SK-N-SH (cell line): ENCODE measurements at regions of chr12 and their contacts with region 1.

Region 1: GRCh38 chr12:66130277-66131066 is at the start of gene LLPH:
- DNase-seq: peak; percentile 90
- H3K4me3 ChIP-seq: peak within 1 kb of the TSS; percentile 90 to 99
- H3K27ac ChIP-seq: peak within 1 kb of the TSS; percentile 65 to 68
- H3K4me1 ChIP-seq: peaks cover 6 to 16% of the 10 kb centered on the region in 2 experiments; a peak in 3 of 4 replicates
- H3K27me3 ChIP-seq: no peaks in the 10 kb centered on the region
- CTCF ChIP-seq: no peak
- EP300 ChIP-seq: no peak
- RAD21 ChIP-seq: no peak
- polyA plus RNA-seq, gene LLPH: 7.4 and 9.1 TPM in 2 replicates

Region 2: DNA sequence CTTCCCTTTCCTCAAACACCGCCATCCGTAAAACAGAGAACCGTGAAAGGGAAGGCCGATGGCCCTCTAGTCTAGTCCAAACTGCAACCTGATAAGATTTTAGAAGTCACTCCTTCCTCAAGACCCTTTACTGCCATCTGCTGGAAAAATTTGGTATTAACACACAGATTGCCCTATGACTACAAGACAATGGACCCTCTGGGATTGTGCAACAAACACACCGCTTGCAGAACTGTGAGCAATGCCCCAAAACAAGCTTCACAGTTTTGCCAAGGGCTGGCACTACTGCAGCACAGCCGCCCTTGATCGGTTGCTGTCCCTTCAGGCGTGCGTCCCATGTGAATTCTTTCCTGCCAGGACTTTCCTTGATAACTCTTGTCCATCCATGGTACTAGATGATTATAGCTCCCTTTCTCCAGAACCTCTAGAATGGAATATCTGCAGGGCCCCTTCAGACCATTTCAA is 23.0 kb before region 1 on chr12:
- CTCF ChIA-PET with region 1: no interaction called
- POLR2A ChIA-PET with region 1: no interaction called
- DNase-seq: peak; percentile 58
- H3K4me3 ChIP-seq: no peak overlapping the region; a peak in 1 of 4 replicates
- H3K27ac ChIP-seq: peak overlapping the region; percentile 56; a peak in 2 of 4 replicates
- H3K4me1 ChIP-seq: peaks cover 0 to 9% of the 10 kb centered on the region in 2 experiments; a peak in 2 of 4 replicates
- H3K27me3 ChIP-seq: no peaks in the 10 kb centered on the region
- CTCF ChIP-seq: peak; percentile 72
- EP300 ChIP-seq: no peak
- RAD21 ChIP-seq: peak; percentile 72

Region 3: DNA sequence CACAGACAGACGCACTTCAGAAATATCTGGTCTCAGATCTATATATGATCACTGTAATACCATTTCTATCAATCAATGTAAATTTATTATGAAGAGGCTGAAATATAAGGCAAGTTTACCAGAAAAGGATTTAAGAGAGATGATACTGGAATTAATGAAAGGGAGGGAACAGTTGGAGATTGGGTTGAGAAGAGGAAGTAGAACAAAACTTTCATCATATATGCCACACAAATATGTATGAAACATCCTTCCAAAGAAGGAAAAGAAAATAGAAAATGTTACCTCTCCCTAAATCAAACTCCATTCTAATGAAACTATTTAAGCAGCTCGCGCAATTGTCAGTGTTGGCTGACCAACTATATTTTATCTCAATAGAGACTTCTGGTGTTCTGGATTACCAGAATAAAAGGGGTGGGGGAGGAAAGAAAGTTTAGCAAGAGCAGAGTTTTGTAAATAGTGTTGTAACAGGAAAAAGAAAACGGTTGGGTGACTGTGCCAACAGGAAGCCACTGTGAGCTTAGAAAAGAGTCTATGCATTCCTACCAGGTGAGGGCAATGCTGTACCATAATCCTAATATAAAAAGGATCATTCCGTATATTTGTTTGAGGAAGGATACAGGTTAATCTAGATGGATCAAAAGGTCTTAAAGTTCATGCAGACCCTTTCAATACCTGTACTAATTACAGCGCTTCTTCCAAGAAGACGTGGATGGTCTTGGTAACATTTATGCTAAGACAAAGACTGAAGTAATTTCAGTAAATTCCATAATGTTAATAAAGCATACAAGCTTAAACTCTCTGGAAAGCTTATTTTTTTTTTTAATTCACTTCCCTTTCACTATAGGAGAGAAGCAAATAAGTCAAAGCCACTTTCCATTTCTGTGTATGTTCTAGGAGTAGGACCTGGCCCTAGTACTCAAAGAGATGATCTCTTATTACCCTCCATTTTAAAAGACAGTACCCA is 14.6 kb after region 1 on chr12:
- CTCF ChIA-PET with region 1: interaction called, 12 read pairs
- POLR2A ChIA-PET with region 1: no interaction called
- DNase-seq: peak; percentile 39
- H3K4me3 ChIP-seq: no peak overlapping the region
- H3K27ac ChIP-seq: no peak overlapping the region; a peak in 1 of 4 replicates
- H3K4me1 ChIP-seq: no peaks in the 10 kb centered on the region; a peak in 1 of 4 replicates
- H3K27me3 ChIP-seq: no peaks in the 10 kb centered on the region
- CTCF ChIP-seq: peak; percentile 65
- EP300 ChIP-seq: no peak
- RAD21 ChIP-seq: peak; percentile 56

Region 4: GRCh38 chr12:66169221-66170170 is 39.0 kb after region 1 on chr12 and contains the start of gene TMBIM4:
- CTCF ChIA-PET with region 1: no interaction called
- POLR2A ChIA-PET with region 1: interaction called, 21 read pairs
- DNase-seq: peak; percentile 94
- H3K4me3 ChIP-seq: peak within 1 kb of the TSS; percentile 66 to 69
- H3K27ac ChIP-seq: peak within 1 kb of the TSS; percentile 98 to 99
- H3K4me1 ChIP-seq: peaks cover 4 to 6% of the 10 kb centered on the region in 2 experiments; a peak in 3 of 4 replicates
- H3K27me3 ChIP-seq: no peaks in the 10 kb centered on the region
- CTCF ChIP-seq: peak; percentile 64
- EP300 ChIP-seq: no peak
- RAD21 ChIP-seq: peak; percentile 36; the same call in 1 of the 2 replicates
- polyA plus RNA-seq, gene TMBIM4: 68.5 and 94.6 TPM in 2 replicates

Region 5: DNA sequence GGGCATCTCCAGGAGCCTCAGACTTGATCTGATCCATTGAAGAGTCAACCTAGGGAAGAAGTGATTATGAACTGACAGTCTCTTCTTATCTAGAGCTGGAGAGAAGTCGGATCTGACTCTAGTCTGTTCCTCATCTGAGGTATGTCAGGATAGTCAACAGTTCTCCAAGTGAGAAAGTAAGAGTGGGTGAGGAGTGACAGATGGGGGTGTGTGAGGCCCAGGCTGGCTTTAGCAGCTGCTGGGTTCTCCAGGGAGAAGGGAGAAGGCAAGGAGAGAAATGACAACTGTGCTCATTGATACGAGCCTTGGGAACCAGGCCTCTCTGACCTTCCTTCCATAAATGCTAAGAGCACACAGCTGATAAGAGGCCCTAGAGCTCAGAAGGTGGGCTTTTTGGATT is 111.8 kb after region 1 on chr12:
- CTCF ChIA-PET with region 1: no interaction called
- POLR2A ChIA-PET with region 1: no interaction called
- DNase-seq: no peak
- H3K4me3 ChIP-seq: no peak overlapping the region
- H3K27ac ChIP-seq: no peak overlapping the region
- H3K4me1 ChIP-seq: no peaks in the 10 kb centered on the region; a peak in 1 of 4 replicates
- H3K27me3 ChIP-seq: peaks cover 2% of the 10 kb centered on the region; the same call in 1 of the 2 replicates
- CTCF ChIP-seq: no peak
- EP300 ChIP-seq: no peak
- RAD21 ChIP-seq: no peak

Region 6: GRCh38 chr12:66301944-66302826 is 171.7 kb after region 1 on chr12 and contains the start of gene HELB:
- CTCF ChIA-PET with region 1: no interaction called
- POLR2A ChIA-PET with region 1: no interaction called
- DNase-seq: peak; percentile 91
- H3K4me3 ChIP-seq: peak within 1 kb of the TSS; percentile 74 to 96
- H3K27ac ChIP-seq: peak within 1 kb of the TSS; percentile 34 to 82; a peak in 3 of 4 replicates
- H3K4me1 ChIP-seq: peaks cover 2 to 5% of the 10 kb centered on the region in 2 experiments; a peak in 2 of 4 replicates
- H3K27me3 ChIP-seq: no peaks in the 10 kb centered on the region
- CTCF ChIP-seq: no peak
- EP300 ChIP-seq: no peak
- RAD21 ChIP-seq: no peak
- polyA plus RNA-seq, gene HELB: 0.38 and 0.54 TPM in 2 replicates